CD14-positive monocyte (primary cell): ENCODE measurements at regions of chrX and their contacts with region 1.

Region 1: DNA sequence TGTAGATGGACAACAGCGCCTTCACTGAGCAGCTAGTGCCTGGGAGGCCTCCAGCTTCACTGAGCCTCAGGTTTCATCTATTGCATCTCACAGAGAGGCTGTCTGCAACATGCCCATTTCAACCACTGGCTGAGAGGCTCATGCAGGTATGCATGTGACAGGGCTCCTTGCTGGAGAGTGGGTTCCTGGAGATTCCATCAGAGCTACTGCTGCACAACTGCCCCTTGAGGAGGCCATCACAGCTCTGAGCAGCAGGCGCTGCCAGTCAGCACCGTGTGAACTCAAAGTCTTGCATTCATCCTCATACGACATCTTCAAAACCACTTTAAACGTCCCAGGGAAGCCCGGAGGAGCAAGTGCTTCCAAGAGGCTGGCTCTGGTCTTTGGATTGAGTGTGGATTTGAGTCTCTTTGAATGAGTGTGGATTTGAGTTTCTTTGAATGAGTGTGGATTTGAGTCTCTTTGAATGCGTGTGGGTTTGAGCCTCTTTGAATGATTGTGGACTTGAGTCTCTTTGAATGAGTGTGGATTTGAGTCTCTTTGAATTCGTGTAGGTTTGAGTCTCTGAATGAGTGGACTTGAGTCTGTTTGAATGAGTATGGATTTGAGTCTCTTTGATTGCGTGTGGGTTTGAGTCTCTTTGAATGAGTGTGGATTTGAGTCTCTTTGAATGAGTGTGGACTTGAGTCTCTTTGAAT is 8.7 kb downstream of the P2RY8 start:
- DNase-seq: no peak
- H3K4me3 ChIP-seq: no peak overlapping the region
- H3K4me3 Mint-ChIP-seq: no peak overlapping the region
- H3K27ac ChIP-seq: no peak overlapping the region
- H3K27ac Mint-ChIP-seq: no peak overlapping the region
- H3K4me1 ChIP-seq: peaks cover 0 to 7% of the 10 kb centered on the region in 2 donors
- H3K4me1 Mint-ChIP-seq: peaks cover 2% of the 10 kb centered on the region
- H3K27me3 ChIP-seq: no peaks in the 10 kb centered on the region
- H3K27me3 Mint-ChIP-seq: no peaks in the 10 kb centered on the region
- CTCF ChIP-seq: no peak

Region 2: DNA sequence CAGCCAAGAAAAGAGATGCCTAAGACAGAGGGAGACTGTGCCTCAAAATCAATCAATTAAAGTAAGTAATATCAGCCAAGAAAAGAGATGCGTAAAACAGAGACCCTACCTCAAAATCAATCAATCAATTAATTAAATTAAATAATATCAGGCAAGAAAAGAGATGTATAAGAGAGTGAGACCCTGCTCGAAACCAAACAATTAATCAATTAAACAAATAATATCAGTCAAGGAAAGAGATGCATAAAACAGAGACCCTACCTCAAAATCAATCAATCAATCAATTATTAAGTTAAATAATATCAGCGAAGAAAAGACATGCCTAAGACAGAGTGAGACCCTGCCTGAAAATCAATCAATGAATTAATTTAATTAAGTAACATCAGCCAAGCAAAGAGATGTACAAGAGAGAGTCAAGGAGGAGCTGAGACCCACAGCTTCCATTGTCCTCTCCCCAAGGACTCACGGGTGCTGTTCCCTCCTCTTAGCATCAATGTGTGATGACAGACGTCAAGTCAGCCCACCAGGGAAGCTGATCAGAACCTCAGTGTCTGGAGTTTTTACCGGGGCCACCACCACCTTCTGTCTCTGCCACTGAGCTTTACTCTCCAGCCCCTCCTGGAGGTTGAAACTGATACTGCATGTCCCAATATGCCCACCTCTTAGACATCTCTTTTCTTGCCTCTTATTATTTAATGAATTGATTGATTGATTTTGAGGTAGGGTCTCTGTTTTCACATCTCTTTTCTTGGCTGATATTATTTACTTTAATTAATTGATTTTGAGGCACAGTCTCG is 52.6 kb after region 1 on chrX:
- intact Hi-C with region 1: loop called in 1 of 2 experiments (anchors 5 kb)
- DNase-seq: peak; percentile 71 to 77 (median 75)
- H3K4me3 ChIP-seq: no peak overlapping the region
- H3K4me3 Mint-ChIP-seq: no peak overlapping the region
- H3K27ac ChIP-seq: no peak overlapping the region
- H3K27ac Mint-ChIP-seq: no peak overlapping the region
- H3K4me1 ChIP-seq: no peaks in the 10 kb centered on the region
- H3K4me1 Mint-ChIP-seq: peaks cover 9% of the 10 kb centered on the region
- H3K27me3 ChIP-seq: no peaks in the 10 kb centered on the region
- H3K27me3 Mint-ChIP-seq: peaks cover 0 to 2% (median 0%) of the 10 kb centered on the region in 3 donors
- CTCF ChIP-seq: peak; percentile 98